Cardiac septum (tissue), 1 donor: ENCODE measurements at regions of chr2 and their contacts with region 1.

Region 1: DNA sequence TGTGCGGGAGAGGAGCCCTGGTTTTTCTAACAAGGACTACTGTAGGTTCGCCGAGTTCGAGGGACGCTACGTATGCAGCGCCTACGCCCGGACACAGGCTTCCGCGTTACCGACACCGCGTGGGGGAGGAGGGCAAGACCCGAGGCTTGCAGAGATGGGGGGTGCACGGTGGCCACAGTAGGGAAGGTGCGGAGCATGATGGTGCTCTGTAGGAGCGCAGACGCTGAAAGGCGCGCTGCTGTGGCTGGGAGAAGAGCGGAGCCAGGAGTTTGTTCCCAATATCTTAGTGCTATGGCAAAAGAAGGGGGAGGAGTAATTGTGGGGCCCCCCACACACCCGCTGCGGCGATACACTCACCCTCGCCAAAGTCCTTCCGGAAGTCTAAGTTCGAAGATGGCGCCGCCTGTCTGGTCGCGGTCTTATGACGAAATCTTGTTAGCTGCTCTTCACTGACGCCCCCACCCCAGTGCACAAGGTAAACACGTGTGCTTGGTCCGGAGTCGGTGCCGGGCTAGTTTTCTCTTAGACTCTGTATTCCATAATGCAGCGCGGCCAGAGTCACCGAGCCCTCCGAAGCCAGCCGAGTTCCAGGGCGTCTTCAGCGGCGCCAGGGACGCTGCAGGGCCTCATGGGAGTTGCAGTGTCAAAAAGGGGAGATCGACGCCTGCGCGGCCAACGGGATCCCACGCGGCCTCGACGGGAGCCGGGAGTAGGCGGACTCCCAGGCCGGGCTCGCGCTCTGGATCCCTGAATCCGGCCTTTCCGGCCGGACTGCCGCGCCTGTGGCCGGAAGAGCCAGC is at the start of gene GTF3C2:
- DNase-seq: peak; percentile 96
- total RNA-seq, gene GTF3C2: 23.9 TPM

Region 2: DNA sequence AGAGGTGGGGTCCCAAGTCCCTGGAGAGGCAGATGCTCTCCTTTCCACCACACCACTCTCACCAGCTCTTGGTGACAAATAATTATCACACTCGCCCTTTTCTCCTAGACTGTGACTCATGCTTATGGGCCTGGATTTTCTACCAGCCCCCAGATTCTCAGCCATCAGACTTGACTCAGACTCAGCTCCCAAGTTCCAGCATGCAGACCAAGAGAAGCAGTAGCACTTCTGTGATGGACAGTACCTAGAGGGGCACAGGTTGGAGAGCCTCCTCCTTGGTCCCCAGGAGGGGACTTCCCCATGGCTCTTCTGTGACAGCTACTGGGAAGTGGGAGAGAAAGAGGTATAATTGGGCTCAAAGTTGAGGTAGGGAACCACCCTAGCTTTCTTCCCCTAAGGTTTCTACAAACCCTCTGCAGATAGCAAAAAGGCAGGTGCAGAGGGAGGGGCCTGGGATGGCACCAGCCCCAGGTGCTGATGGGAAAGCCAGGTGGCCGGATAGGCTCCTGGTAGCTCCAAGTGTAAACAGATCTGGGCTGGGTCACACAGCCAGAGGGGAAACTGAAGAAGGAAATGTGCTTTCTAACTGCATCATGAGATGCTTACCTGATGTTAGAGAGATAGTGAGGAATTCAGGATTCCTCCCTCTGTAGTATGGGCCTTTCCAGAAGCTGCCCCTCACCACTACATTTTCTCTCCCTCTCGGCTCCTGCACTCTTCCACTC is 203.6 kb before region 1 on chr2:
- intact Hi-C with region 1: no loop called
- DNase-seq: no peak

Region 3: DNA sequence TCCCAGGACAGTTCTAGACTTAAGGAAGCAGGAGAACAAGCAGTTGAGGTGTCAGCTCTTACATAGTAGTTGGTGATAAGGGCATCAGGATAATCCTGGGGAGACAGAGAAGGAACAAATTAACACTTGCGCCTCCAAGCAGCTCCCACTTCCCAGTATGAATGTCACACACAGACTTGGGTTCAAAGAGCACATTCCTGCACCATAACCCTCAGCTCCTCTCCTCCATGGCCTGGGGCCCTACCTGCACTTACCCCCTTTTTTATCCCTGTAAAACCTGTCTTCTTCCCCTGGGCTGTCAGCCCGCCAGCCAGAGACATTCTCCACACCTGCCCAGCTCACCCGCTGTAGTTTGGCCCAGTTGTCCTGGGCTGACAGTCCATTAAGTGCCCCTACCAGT is 44.4 kb before region 1 on chr2:
- intact Hi-C with region 1: no loop called
- DNase-seq: peak; percentile 47

Region 4: GRCh38 chr2:27322766-27323595 is 33.6 kb before region 1 on chr2 and contains the start of gene MPV17:
- intact Hi-C with region 1: loop called (anchors 2 kb)
- DNase-seq: peak; percentile 97
- total RNA-seq, gene MPV17: 69.3 TPM

Region 5: GRCh38 chr2:27494944-27495554 is 138.5 kb after region 1 on chr2 and contains the start of gene FNDC4:
- intact Hi-C with region 1: no loop called
- DNase-seq: no peak
- total RNA-seq, gene FNDC4: 3.0 TPM